HepG2 (cell line): ENCODE measurements at regions of chr13 and their contacts with region 1.

Region 1: GRCh38 chr13:32142956-32143375 is 111.4 kb downstream of the FRY start:
- DNase-seq: peak; percentile 98
- ATAC-seq: peak; percentile 98
- H3K4me3 ChIP-seq: no peak overlapping the region; a peak in 1 of 6 replicates
- H3K27ac ChIP-seq: peak overlapping the region; percentile 77
- H3K4me1 ChIP-seq: peaks cover 69% of the 10 kb centered on the region
- H3K27me3 ChIP-seq: no peaks in the 10 kb centered on the region
- CTCF ChIP-seq: no peak
- EP300 ChIP-seq: peak; percentile 92 to 97
- POLR2A ChIP-seq: no peak
- RAD21 ChIP-seq: peak; percentile 28; the same call in 1 of the 2 replicates

Region 2: GRCh38 chr13:32019612-32020233 is 123.2 kb before region 1 on chr13:
- CTCF ChIA-PET with region 1: no interaction called
- POLR2A ChIA-PET with region 1: no interaction called
- in situ Hi-C with region 1: no loop called
- intact Hi-C with region 1: loop called (anchors 5 kb)
- DNase-seq: peak; percentile 73
- ATAC-seq: peak; percentile 92
- H3K4me3 ChIP-seq: no peak overlapping the region
- H3K27ac ChIP-seq: no peak overlapping the region
- H3K4me1 ChIP-seq: peaks cover 20% of the 10 kb centered on the region; the same call in 1 of the 2 replicates
- H3K27me3 ChIP-seq: no peaks in the 10 kb centered on the region
- CTCF ChIP-seq: peak; percentile 89
- EP300 ChIP-seq: no peak
- POLR2A ChIP-seq: no peak
- RAD21 ChIP-seq: peak; percentile 73

Region 3: GRCh38 chr13:32080328-32080744 is 62.6 kb before region 1 on chr13:
- CTCF ChIA-PET with region 1: no interaction called
- POLR2A ChIA-PET with region 1: no interaction called
- in situ Hi-C with region 1: no loop called
- intact Hi-C with region 1: loop called (anchors 5 kb)
- DNase-seq: peak; percentile 90
- ATAC-seq: peak; percentile 91
- H3K4me3 ChIP-seq: no peak overlapping the region
- H3K27ac ChIP-seq: peak overlapping the region; percentile 66
- H3K4me1 ChIP-seq: peaks cover 88% of the 10 kb centered on the region
- H3K27me3 ChIP-seq: no peaks in the 10 kb centered on the region
- CTCF ChIP-seq: no peak
- EP300 ChIP-seq: peak in 1 of 2 experiments; percentile 91; a peak in 2 of 4 replicates
- POLR2A ChIP-seq: no peak
- RAD21 ChIP-seq: no peak

Region 4: DNA sequence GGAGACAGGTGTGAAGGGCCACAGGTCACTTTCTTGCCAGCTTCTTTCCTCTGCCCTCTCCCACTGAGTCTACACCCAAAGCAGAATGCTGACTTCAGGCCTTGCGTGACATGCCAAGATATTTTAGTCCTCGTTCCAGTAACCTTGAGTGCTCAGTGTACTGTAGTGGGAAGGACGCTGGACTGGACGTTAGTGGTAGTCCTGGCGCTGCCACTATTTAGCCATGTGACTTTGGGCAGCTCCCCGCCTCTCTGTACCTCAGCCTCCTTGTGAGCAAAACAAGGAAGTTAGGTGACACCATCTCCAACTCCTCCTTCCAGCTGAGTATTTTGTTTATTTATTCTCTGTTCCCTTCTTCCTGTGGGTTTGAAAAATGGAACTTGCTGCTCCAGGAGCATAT is 25.3 kb before region 1 on chr13:
- CTCF ChIA-PET with region 1: no interaction called
- POLR2A ChIA-PET with region 1: no interaction called
- in situ Hi-C with region 1: no loop called
- intact Hi-C with region 1: no loop called
- DNase-seq: no peak
- ATAC-seq: no peak
- H3K4me3 ChIP-seq: no peak overlapping the region
- H3K27ac ChIP-seq: no peak overlapping the region
- H3K4me1 ChIP-seq: peaks cover 9% of the 10 kb centered on the region
- H3K27me3 ChIP-seq: no peaks in the 10 kb centered on the region; a peak in 1 of 5 replicates
- CTCF ChIP-seq: no peak
- EP300 ChIP-seq: no peak
- POLR2A ChIP-seq: no peak
- RAD21 ChIP-seq: no peak

Region 5: GRCh38 chr13:32932376-32932775 is 789.4 kb after region 1 on chr13:
- CTCF ChIA-PET with region 1: no interaction called
- POLR2A ChIA-PET with region 1: no interaction called
- in situ Hi-C with region 1: no loop called
- intact Hi-C with region 1: no loop called
- DNase-seq: no peak
- ATAC-seq: no peak
- H3K4me3 ChIP-seq: no peak overlapping the region
- H3K27ac ChIP-seq: no peak overlapping the region
- H3K4me1 ChIP-seq: no peaks in the 10 kb centered on the region
- H3K27me3 ChIP-seq: no peaks in the 10 kb centered on the region
- CTCF ChIP-seq: no peak
- EP300 ChIP-seq: no peak
- POLR2A ChIP-seq: no peak
- RAD21 ChIP-seq: no peak